Activated CD8-positive, alpha-beta T cell treated with anti-CD3 and anti-CD28 coated beads for 36 hours (primary cell): ENCODE measurements at regions of chr17 and their contacts with region 1.

Region 1: DNA sequence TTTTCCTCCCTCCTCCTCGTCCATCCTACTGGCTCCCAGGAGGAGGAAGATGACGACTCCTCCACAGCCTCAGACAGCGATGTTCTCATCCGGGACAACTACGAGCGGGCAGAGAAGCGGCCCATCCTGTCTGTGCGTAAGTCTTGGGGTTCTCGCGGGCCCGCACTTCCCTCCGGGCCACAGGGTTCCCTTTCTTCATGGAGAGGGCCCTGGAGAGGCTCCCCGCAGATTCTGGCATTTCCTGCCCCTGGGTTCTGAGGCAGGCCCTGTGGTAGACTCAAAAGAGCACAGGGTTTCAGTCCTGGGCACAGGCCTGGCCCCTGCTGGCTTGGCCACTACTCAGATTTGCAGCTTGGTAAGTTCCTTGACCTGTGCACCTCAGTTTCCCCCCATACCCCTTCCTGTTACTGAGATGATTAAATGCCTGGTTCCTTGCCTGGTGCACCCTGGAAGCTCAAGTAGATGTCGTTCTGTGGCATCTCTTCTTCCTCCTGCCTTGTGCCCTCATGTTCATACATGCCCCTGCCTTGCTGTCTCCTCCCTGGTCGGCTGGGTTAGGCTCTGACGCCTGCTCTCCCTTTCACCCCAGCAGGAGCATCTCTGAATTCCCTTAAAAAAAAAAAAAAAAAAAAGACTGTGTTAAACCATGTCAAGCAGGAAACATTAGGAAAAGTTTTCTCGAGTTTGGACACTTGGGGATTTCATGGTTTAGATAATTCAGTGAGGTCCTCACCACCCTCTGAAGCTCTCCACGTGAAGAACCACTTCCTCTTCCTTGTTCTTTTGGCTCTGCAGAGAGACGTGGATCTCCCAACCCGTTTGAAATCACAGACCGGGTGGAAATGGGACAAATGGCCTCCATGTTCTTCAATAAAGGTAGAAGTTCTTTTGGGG is 14.3 kb upstream of the NAT9 start:
- DNase-seq: no peak
- ATAC-seq: no peak
- H3K4me3 Mint-ChIP-seq: no peak overlapping the region
- H3K27ac Mint-ChIP-seq: peak overlapping the region; percentile 27
- H3K4me1 Mint-ChIP-seq: peaks cover 37% of the 10 kb centered on the region
- H3K27me3 Mint-ChIP-seq: no peaks in the 10 kb centered on the region
- CTCF ChIP-seq: no peak

Region 2: DNA sequence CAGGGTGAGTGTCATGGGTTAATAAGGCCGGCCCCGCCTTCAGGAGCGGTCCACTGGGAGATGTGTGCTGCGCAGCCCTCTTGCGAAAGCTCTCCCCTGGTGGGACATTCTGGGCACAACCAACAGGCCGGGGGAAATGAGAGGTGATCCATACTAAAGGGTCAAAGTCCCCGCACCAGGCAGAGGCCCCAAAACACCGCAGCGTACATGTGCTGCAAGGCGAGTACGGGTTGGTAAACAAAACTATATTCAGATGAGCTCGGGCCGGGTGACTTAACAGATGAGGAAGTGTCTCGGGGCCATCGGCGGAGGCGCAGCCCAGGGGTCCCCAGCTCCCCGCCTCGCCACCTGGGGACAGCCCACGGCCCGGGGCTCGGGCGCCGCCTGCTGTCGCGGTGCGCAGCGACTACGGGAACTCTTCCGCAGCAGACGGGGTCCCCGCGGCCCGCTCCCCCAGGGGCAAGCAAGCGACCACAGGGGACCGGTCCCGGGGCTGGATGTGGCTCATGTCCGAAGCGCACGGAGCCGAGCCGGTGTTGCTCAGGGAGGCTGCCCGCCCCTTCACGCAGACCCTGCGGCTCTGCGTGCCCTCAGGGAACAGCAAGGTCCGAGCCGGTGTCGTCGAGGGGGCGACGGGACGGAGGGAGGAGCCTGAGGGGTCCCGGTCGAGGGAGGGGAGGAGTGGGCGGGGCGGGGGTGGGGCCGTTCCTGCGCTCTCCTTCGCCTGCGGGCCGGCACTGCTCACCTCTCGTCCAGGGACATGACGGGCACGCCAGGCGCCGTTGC is 53.7 kb before region 1 on chr17 and contains the start of gene RAB37:
- CTCF ChIA-PET with region 1: interaction called, 35 read pairs
- POLR2A ChIA-PET with region 1: interaction called, 6 read pairs
- intact Hi-C with region 1: no loop called
- DNase-seq: peak; percentile 62
- ATAC-seq: peak; percentile 17
- H3K4me3 Mint-ChIP-seq: peak within 1 kb of the TSS; percentile 78
- H3K27ac Mint-ChIP-seq: peak within 1 kb of the TSS; percentile 90
- H3K4me1 Mint-ChIP-seq: peaks cover 46% of the 10 kb centered on the region
- H3K27me3 Mint-ChIP-seq: no peaks in the 10 kb centered on the region
- CTCF ChIP-seq: peak; percentile 53
- total RNA-seq, gene RAB37: 6.6 to 6.7 TPM

Region 3: GRCh38 chr17:74748529-74749365 is 41.7 kb before region 1 on chr17 and contains the start of gene NHERF1:
- CTCF ChIA-PET with region 1: interaction called, 67 read pairs
- POLR2A ChIA-PET with region 1: interaction called, 8 read pairs
- intact Hi-C with region 1: no loop called
- DNase-seq: peak; percentile 94
- ATAC-seq: peak; percentile 89
- H3K4me3 Mint-ChIP-seq: peak within 1 kb of the TSS; percentile 85
- H3K27ac Mint-ChIP-seq: peak within 1 kb of the TSS; percentile 86
- H3K4me1 Mint-ChIP-seq: peaks cover 49% of the 10 kb centered on the region
- H3K27me3 Mint-ChIP-seq: no peaks in the 10 kb centered on the region
- CTCF ChIP-seq: peak; percentile 30
- total RNA-seq, gene NHERF1: 143 to 150 TPM

Region 4: DNA sequence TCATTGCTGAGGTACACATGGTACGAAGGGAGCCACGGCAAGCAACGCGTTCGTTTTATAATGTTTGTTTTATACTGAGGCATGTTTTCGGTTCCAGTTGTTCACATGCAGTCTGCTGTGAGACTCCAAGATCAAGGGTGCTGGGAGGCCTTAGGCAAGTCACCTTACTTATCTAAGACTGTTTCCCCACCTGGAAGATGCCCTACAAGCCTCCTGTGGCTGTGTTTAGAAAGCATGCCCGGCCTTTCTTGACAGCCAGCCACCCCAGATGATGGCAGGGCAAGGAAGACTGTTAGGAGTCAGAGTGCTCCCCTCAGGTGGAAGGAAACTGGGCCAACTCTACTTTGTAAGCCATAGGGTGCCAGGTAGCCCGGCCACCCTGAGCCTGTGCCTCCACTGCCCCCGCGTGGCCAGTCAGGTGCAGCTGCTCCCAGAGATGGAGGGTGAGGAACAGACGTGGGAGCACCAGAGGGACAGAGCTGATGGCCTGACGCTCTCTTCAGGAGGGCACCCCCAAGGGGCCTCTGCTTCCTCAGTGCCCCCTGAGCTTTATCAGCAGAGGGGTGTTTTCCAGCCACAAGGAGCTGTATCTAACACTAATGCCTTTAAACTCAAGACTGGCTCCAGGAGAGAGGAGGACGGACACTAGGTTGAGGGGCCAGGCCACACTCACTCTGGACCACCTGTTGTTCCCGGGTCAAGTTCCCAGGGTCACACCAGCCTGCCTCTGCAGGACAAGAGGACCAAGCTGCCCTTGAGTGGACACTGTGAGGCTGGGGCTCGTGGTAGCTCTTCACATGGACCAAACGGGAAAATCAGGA is 19.7 kb before region 1 on chr17:
- CTCF ChIA-PET with region 1: interaction called, 19 read pairs
- POLR2A ChIA-PET with region 1: no interaction called
- intact Hi-C with region 1: no loop called
- DNase-seq: peak; percentile 78
- ATAC-seq: peak; percentile 88
- H3K4me3 Mint-ChIP-seq: no peak overlapping the region
- H3K27ac Mint-ChIP-seq: peak overlapping the region; percentile 72
- H3K4me1 Mint-ChIP-seq: peaks cover 30% of the 10 kb centered on the region
- H3K27me3 Mint-ChIP-seq: no peaks in the 10 kb centered on the region
- CTCF ChIP-seq: peak; percentile 76

Region 5: GRCh38 chr17:74807925-74808324 is 17.5 kb after region 1 on chr17:
- CTCF ChIA-PET with region 1: interaction called, 28 read pairs
- POLR2A ChIA-PET with region 1: interaction called, 5 read pairs
- intact Hi-C with region 1: no loop called
- DNase-seq: no peak
- ATAC-seq: no peak
- H3K4me3 Mint-ChIP-seq: no peak overlapping the region
- H3K27ac Mint-ChIP-seq: no peak overlapping the region
- H3K4me1 Mint-ChIP-seq: no peaks in the 10 kb centered on the region
- H3K27me3 Mint-ChIP-seq: no peaks in the 10 kb centered on the region
- CTCF ChIP-seq: no peak

Region 6: GRCh38 chr17:74852237-74853047 is 62.0 kb after region 1 on chr17:
- CTCF ChIA-PET with region 1: interaction called, 247 read pairs
- POLR2A ChIA-PET with region 1: no interaction called
- intact Hi-C with region 1: no loop called
- DNase-seq: peak; percentile 53
- ATAC-seq: peak; percentile 84
- H3K4me3 Mint-ChIP-seq: peak overlapping the region; percentile 57
- H3K27ac Mint-ChIP-seq: no peak overlapping the region
- H3K4me1 Mint-ChIP-seq: peaks cover 2% of the 10 kb centered on the region
- H3K27me3 Mint-ChIP-seq: peaks cover 49% of the 10 kb centered on the region
- CTCF ChIP-seq: no peak

Region 7: GRCh38 chr17:74873038-74873873 is 82.8 kb after region 1 on chr17:
- CTCF ChIA-PET with region 1: interaction called, 33 read pairs
- POLR2A ChIA-PET with region 1: interaction called, 3 read pairs
- intact Hi-C with region 1: no loop called
- DNase-seq: peak; percentile 100
- ATAC-seq: peak; percentile 95
- H3K4me3 Mint-ChIP-seq: peak overlapping the region; percentile 75
- H3K27ac Mint-ChIP-seq: peak overlapping the region; percentile 94
- H3K4me1 Mint-ChIP-seq: peaks cover 15% of the 10 kb centered on the region
- H3K27me3 Mint-ChIP-seq: no peaks in the 10 kb centered on the region
- CTCF ChIP-seq: no peak

Region 8: DNA sequence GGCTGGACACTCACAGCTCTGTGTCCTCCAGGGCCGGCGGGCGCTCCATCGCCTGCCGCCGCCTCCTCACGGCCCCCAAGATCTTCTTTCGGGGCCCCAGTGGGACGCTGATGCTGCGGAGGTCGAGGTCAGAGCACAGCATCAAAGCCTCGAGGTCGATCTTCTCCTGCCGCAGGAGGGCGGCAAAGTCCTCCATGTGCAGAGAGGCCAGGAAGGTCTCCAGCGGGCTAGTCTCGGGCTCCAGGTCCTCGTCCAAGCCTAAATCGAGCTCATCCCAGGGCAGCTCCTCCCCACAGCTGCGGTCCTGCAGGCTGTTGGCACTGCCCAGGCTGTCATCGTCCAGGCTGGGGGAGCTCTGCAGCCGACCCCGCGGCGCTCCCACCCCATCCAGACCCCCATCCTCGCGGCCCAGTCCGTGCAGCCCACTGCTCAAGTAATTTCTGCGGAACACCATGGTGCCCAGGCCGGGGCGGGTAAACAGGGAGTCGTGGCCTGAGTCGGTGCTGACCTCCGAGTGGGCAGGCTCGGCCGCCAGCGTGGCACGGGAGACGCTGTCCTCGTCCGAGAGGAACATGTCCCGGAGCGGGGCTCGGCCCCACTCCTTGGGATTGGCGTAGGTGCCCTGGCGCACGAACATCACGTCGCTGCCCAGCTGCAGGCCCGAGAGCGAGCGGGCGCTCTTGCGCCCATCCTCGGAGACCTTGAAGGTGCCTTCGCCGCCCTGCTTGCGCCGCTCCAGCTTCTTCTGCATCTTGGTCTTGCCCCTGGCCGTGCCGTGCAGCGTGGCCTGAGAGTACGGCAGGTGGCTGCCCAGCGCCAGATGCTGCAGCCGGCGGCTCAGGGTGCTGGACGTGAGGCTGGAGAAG is 129.3 kb after region 1 on chr17:
- CTCF ChIA-PET with region 1: no interaction called
- POLR2A ChIA-PET with region 1: no interaction called
- intact Hi-C with region 1: no loop called
- DNase-seq: peak; percentile 32
- ATAC-seq: no peak
- H3K4me3 Mint-ChIP-seq: no peak overlapping the region
- H3K27ac Mint-ChIP-seq: no peak overlapping the region
- H3K4me1 Mint-ChIP-seq: peaks cover 9% of the 10 kb centered on the region
- H3K27me3 Mint-ChIP-seq: peaks cover 28% of the 10 kb centered on the region
- CTCF ChIP-seq: no peak

Region 9: DNA sequence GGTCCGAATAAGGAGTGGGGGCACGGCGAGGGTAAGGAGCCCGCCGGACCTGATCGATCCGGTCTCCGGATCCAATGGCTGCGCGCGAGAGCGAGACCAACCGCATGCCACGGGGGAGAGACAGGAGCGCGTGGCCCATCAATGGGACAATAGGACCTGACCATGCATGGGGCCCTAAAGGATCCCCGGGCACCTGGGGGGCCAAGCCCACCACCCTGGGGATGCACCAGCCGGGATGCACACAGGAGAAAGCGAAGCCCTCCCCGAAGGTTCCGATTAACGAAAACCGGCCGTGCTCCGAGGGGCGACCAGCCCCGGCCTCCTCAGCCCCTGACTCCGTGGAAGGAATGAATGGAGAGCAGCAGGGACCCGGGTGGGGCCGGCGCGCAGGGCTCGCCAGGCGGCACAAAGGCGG is 363.4 kb after region 1 on chr17:
- CTCF ChIA-PET with region 1: no interaction called
- POLR2A ChIA-PET with region 1: no interaction called
- intact Hi-C with region 1: no loop called
- DNase-seq: peak; percentile 51
- ATAC-seq: no peak
- H3K4me3 Mint-ChIP-seq: peak overlapping the region; percentile 94
- H3K27ac Mint-ChIP-seq: peak overlapping the region; percentile 87
- H3K4me1 Mint-ChIP-seq: peaks cover 32% of the 10 kb centered on the region
- H3K27me3 Mint-ChIP-seq: no peaks in the 10 kb centered on the region
- CTCF ChIP-seq: no peak